ENCODE measurements at regions of chr10 and their contacts with region 1.

Region 1: GRCh38 chr10:56622335-56622973 is 261.4 kb upstream of the ZWINT start:
- DNase-seq: no peak
- H3K4me3 ChIP-seq: peak overlapping the region in 1 of 2 donors; percentile 33
- H3K27ac ChIP-seq: peak overlapping the region in 1 of 2 donors; percentile 12
- H3K4me1 ChIP-seq: no peaks in the 10 kb centered on the region
- H3K27me3 ChIP-seq: no peaks in the 10 kb centered on the region
- CTCF ChIP-seq: no peak
- POLR2A ChIP-seq: no peak

Region 2: DNA sequence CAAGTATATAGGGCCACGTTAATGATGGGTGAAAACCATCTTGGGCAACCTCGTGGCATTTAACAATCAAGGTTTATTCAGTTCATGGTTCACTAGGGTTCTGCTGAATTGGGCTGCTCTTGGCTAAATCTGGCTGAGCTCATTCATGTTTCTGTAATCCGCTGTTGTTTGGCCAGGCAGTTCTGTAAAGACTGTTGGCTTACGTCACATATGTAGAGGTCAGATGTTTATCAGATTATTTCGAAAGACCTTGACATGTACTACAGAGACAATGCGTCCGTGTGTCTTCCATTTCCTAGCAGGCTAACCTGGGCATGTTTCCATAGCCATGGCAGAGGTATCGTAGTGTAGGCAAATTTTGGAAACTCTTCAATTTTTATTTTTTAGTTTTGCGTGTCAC is 71.4 kb before region 1 on chr10:
- intact Hi-C with region 1: loop called (anchors 2 kb)
- DNase-seq: no peak
- H3K4me3 ChIP-seq: no peak overlapping the region
- H3K27ac ChIP-seq: no peak overlapping the region
- H3K4me1 ChIP-seq: no peaks in the 10 kb centered on the region
- H3K27me3 ChIP-seq: no peaks in the 10 kb centered on the region
- CTCF ChIP-seq: no peak
- POLR2A ChIP-seq: no peak